Activated CD4-positive, alpha-beta memory T cell treated with anti-CD3 and anti-CD28 coated beads, Interleukin-2, amount 10 ng/mL, durations not matched to agents 7 days and 5 days (primary cell): ENCODE measurements at regions of chr2 and their contacts with region 1.

Region 1: GRCh38 chr2:200713003-200713703 is 98.6 kb upstream of the BZW1 start:
- DNase-seq: peak; percentile 96
- H3K4me3 Mint-ChIP-seq: peak overlapping the region; percentile 49
- H3K27ac Mint-ChIP-seq: peak overlapping the region; percentile 97
- H3K4me1 Mint-ChIP-seq: peaks cover 25% of the 10 kb centered on the region
- H3K27me3 Mint-ChIP-seq: no peaks in the 10 kb centered on the region

Region 2: DNA sequence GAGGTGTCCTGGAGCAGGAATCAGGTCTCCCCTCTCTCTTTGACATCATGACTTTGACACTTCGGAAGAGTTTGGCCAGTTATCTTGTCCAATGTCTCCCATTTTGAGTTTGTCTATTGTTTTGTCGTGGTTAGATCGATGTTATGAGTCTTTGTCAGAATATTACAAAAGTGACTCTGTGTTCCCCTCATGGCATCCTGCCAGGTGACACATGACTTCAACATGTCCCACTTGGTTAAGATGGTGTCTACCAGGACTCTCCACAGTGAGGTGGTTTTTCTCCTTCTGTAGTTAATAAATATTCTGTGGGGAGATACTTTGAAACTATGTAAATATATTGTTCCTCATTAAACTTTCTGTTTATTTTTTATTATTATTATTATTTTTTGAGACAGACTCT is 21.9 kb after region 1 on chr2:
- CTCF ChIA-PET with region 1: interaction called, 18 read pairs
- POLR2A ChIA-PET with region 1: interaction called, 13 read pairs
- DNase-seq: no peak
- H3K4me3 Mint-ChIP-seq: no peak overlapping the region
- H3K27ac Mint-ChIP-seq: no peak overlapping the region
- H3K4me1 Mint-ChIP-seq: peaks cover 10% of the 10 kb centered on the region
- H3K27me3 Mint-ChIP-seq: peaks cover 12% of the 10 kb centered on the region

Region 3: GRCh38 chr2:200811336-200812121 is 98.4 kb after region 1 on chr2 and contains the start of gene BZW1:
- CTCF ChIA-PET with region 1: interaction called, 29 read pairs
- POLR2A ChIA-PET with region 1: interaction called, 26 read pairs
- DNase-seq: peak; percentile 97
- H3K4me3 Mint-ChIP-seq: peak within 1 kb of the TSS; percentile 99
- H3K27ac Mint-ChIP-seq: peak within 1 kb of the TSS; percentile 97
- H3K4me1 Mint-ChIP-seq: peaks cover 54% of the 10 kb centered on the region
- H3K27me3 Mint-ChIP-seq: no peaks in the 10 kb centered on the region
- total RNA-seq, gene BZW1: 266 to 272 TPM

Region 4: GRCh38 chr2:200922439-200922838 is 209.3 kb after region 1 on chr2:
- CTCF ChIA-PET with region 1: no interaction called
- POLR2A ChIA-PET with region 1: no interaction called
- DNase-seq: no peak
- H3K4me3 Mint-ChIP-seq: no peak overlapping the region
- H3K27ac Mint-ChIP-seq: peak overlapping the region; percentile 60
- H3K4me1 Mint-ChIP-seq: peaks cover 15% of the 10 kb centered on the region
- H3K27me3 Mint-ChIP-seq: no peaks in the 10 kb centered on the region